ENCODE measurements at regions of chr3 and their contacts with region 1.

Region 1: DNA sequence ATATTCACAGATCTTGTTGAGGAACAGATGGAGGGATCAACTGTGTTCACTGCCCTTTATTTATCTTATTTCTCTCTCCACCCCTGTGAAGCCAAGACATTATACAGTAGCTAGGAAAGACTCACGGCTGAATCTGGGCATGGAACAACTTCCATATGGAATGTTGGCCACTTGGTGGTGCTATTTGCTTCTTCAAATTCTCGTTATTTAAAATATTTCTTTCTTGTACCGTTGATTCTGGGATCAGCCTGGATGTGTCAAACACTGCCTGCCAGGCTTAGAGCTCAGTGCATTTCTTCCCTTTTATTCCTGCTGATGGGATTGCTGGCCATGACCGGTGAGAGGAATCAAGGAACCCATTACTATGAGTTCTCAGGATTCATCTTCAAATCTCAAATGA is 17.5 kb upstream of the GASK1A start:
- DNase-seq: no peak
- ATAC-seq: peak; percentile 91 to 96 (median 92)
- H3K4me3 ChIP-seq: no peak overlapping the region
- H3K27ac ChIP-seq: no peak overlapping the region
- H3K4me1 ChIP-seq: no peaks in the 10 kb centered on the region
- H3K27me3 ChIP-seq: no peaks in the 10 kb centered on the region
- CTCF ChIP-seq: peak; percentile 69 to 82 (median 78)
- POLR2A ChIP-seq: no peak

Region 2: DNA sequence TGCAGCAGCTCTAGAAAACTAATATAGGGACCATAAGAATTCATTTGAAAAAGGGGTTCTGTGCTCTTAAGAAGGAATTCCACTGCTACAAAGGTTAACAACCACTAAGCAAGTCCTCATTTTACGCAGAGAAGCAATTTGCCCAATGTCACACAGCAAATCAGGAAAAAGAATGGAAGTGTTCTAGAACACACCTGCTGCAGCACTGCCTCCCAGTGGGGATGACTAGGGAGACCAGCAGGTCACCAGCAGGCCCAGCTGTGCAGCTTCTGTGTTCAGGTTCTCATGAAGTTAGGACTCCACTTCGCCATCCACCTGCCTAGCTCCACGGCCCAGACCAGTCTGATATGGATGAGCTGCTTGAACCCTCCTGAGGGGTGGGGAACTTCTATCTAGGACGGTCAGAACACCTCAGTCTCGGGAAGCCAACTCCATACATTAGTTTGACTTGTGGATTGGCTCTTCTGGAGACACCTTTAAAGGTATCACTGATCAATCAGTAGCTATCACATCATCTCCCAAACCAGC is 125.7 kb after region 1 on chr3:
- intact Hi-C with region 1: loop called (anchors 5 to 10 kb)
- DNase-seq: peak; percentile 46 to 72 (median 70)
- ATAC-seq: peak; percentile 93 to 97 (median 96)
- H3K4me3 ChIP-seq: no peak overlapping the region
- H3K27ac ChIP-seq: no peak overlapping the region
- H3K4me1 ChIP-seq: peaks cover 0 to 7% (median 0%) of the 10 kb centered on the region in 4 donors
- H3K27me3 ChIP-seq: no peaks in the 10 kb centered on the region
- CTCF ChIP-seq: peak; percentile 40 to 67 (median 62)
- POLR2A ChIP-seq: no peak

Measured in right lobe of liver (tissue), 6 donors.